Ascending aorta (tissue), 2 donors: ENCODE measurements at regions of chr13 and their contacts with region 1.

Region 1: GRCh38 chr13:21458813-21459701 is at the start of gene ZDHHC20:
- DNase-seq: peak; percentile 59 to 94
- H3K4me3 ChIP-seq: peak within 1 kb of the TSS; percentile 88 to 93
- H3K27ac ChIP-seq: peak within 1 kb of the TSS; percentile 90 to 95
- H3K4me1 ChIP-seq: no peaks in the 10 kb centered on the region
- H3K27me3 ChIP-seq: no peaks in the 10 kb centered on the region
- CTCF ChIP-seq: no peak
- total RNA-seq, gene ZDHHC20: 39.8 TPM

Region 2: DNA sequence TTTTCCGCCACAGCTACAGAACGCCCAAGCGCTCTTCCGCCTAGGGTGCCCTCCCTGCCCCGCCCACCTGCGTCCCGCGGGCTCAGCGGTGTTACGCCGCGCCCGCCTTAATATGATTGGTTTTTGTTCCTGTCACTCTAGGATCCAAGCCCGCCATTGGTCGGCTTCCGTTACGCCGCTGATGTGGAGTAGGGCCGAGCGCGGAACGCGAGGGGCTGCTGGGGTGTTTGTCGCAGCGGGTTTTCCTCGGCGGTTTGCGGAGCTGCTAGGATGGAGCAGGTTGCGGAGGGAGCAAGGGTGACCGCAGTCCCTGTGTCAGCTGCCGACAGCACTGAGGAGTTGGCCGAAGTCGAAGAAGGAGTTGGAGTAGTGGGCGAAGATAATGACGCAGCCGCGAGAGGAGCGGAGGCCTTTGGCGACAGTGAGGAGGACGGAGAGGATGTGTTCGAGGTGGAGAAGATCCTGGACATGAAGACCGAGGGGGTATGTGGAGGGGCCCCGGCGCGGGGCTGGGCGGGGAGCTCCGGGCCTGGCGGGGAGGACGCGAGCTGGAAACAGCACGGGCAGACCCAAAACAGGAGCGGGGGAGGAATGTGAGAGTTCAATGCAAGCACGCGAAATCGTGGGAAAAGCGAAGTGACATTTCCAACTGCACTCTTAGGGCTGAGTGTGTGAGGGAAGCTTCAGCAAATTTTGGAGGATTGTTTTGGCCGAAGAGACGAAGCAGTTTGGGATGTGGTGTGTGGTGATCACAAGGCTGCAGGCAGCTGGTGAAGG is 1825.4 kb before region 1 on chr13 and contains the start of gene MPHOSPH8:
- intact Hi-C with region 1: loop called (anchors 5 kb)
- DNase-seq: peak; percentile 80 to 97
- H3K4me3 ChIP-seq: peak within 1 kb of the TSS; percentile 71 to 93
- H3K27ac ChIP-seq: peak within 1 kb of the TSS; percentile 92 to 93
- H3K4me1 ChIP-seq: peaks cover 5 to 23% of the 10 kb centered on the region in 2 donors
- H3K27me3 ChIP-seq: no peaks in the 10 kb centered on the region
- CTCF ChIP-seq: no peak
- total RNA-seq, gene MPHOSPH8: 18.5 TPM

Region 3: GRCh38 chr13:20703780-20704445 is 755.1 kb before region 1 on chr13:
- intact Hi-C with region 1: loop called (anchors 10 kb)
- DNase-seq: peak in 1 of 2 donors; percentile 84
- H3K4me3 ChIP-seq: peak overlapping the region; percentile 70 to 95
- H3K27ac ChIP-seq: peak overlapping the region in 1 of 2 donors; percentile 38
- H3K4me1 ChIP-seq: peaks cover 3% of the 10 kb centered on the region in 2 donors
- H3K27me3 ChIP-seq: no peaks in the 10 kb centered on the region
- CTCF ChIP-seq: peak; percentile 16 to 81 (median 42)

Region 4: GRCh38 chr13:21176220-21176982 is 282.7 kb before region 1 on chr13 and contains the starts of genes MRPL57 and SKA3:
- intact Hi-C with region 1: loop called (anchors 1 kb)
- DNase-seq: peak; percentile 64 to 93
- H3K4me3 ChIP-seq: peak within 1 kb of the TSS; percentile 82 to 89
- H3K27ac ChIP-seq: peak within 1 kb of the TSS; percentile 94 to 95
- H3K4me1 ChIP-seq: peaks cover 0 to 6% of the 10 kb centered on the region in 2 donors
- H3K27me3 ChIP-seq: no peaks in the 10 kb centered on the region
- CTCF ChIP-seq: peak; percentile 9 to 45 (median 19)
- total RNA-seq, gene MRPL57: 36.7 TPM
- total RNA-seq, gene SKA3: not detected

Region 5: DNA sequence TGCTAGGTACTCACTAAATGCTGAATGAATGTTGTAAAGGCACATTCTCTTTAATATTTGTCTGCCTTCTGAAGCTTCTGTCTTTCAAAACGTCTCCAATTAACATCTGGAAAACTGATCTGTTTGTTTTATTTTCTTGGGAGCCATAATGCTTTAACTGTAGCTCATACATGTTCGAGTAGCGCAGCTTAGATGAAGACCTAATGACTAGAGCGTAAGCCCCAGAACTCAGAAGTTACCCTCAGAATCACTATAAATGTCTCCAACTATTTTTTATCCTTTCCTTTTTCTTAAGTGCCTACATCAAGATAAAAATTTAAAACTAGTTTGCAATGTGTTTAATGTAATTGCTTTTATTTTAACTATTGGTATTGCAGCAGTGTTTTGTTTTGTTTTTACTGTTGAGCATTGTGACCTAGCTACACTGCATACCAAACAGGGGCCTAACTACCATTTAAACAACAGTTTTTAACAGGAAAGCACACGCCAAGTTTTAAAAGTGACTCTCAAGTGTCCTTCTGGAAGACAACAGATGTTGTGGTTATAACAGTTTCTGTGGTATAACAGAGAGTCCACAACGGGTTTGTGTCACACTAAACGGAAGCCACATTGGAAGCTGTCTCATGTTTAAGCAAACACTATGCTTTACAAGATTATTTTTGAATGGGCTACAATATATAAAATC is 240.6 kb before region 1 on chr13:
- intact Hi-C with region 1: no loop called
- DNase-seq: no peak
- H3K4me3 ChIP-seq: no peak overlapping the region
- H3K27ac ChIP-seq: no peak overlapping the region
- H3K4me1 ChIP-seq: no peaks in the 10 kb centered on the region
- H3K27me3 ChIP-seq: no peaks in the 10 kb centered on the region
- CTCF ChIP-seq: no peak

Region 6: DNA sequence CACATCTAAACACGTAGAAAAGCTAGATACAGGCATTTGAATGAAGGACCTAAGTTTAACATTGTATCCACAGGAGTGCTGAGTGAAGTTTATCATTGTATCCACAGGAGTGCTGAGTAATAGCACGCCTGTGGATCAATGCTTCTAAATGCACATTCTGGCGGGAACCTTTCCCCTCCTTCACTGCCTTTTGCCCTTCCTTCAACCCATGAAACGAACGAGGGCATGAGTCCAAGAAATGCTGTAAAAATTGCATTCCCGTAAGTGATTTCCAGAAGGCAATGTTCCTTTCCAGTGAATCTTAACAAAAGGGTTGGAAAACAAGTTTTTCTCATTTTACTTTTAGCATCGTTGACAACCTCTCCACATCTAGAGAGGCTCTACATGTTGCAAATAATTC is 88.0 kb before region 1 on chr13:
- intact Hi-C with region 1: no loop called
- DNase-seq: no peak
- H3K4me3 ChIP-seq: no peak overlapping the region
- H3K27ac ChIP-seq: no peak overlapping the region
- H3K4me1 ChIP-seq: no peaks in the 10 kb centered on the region
- H3K27me3 ChIP-seq: no peaks in the 10 kb centered on the region
- CTCF ChIP-seq: no peak

Region 7: DNA sequence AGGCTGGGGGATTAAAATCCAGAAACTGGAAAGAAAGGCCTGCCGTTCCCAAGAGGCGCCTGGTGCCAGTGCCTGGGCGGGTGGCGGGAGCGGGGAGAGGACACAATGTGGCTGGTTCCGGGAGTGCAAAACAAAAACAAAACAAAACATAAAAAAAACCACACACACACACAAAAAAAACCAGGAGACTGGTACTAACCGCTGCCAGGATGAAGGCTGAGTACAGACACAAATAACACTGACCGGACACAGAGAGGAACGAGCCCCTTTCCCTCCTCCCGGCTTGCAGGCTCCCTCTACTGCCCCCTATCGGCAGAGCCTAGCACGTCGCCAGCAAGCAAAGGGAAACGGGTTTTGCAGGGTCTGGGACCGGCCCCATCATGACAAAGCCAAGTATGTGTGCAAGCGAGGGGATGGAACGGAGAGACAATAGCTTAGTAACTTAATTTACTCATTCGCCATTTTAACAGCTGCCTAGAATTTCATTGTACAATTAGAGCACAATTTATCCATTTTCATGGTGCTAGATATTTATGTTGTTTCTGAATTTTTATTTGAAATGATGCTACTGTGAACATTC is 17.9 kb after region 1 on chr13:
- intact Hi-C with region 1: loop called (anchors 2 kb)
- DNase-seq: peak in 1 of 2 donors; percentile 87
- H3K4me3 ChIP-seq: peak overlapping the region; percentile 24 to 53
- H3K27ac ChIP-seq: no peak overlapping the region
- H3K4me1 ChIP-seq: peaks cover 0 to 4% of the 10 kb centered on the region in 2 donors
- H3K27me3 ChIP-seq: no peaks in the 10 kb centered on the region
- CTCF ChIP-seq: peak; percentile 80 to 93 (median 90)

Region 8: GRCh38 chr13:21603531-21604448 is 144.7 kb after region 1 on chr13 and contains the start of gene MICU2:
- intact Hi-C with region 1: loop called (anchors 5 kb)
- DNase-seq: peak; percentile 71 to 95
- H3K4me3 ChIP-seq: peak within 1 kb of the TSS; percentile 73 to 74
- H3K27ac ChIP-seq: peak within 1 kb of the TSS; percentile 79 to 94
- H3K4me1 ChIP-seq: peaks cover 0 to 5% of the 10 kb centered on the region in 2 donors
- H3K27me3 ChIP-seq: no peaks in the 10 kb centered on the region
- CTCF ChIP-seq: peak in 1 of 3 experiments; percentile 37
- total RNA-seq, gene MICU2: 41.5 TPM